ENCODE measurements at regions of chr14 and their contacts with region 1.

Region 1: GRCh38 chr14:34227834-34228649 is 234.0 kb downstream of the SPTSSA start:
- DNase-seq: peak; percentile 52 to 76 (median 68)
- ATAC-seq: peak; percentile 87 to 96 (median 92)
- H3K4me3 ChIP-seq: peak overlapping the region in 9 of 12 donors; percentile 13 to 51 (median 31)
- H3K27ac ChIP-seq: peak overlapping the region in 2 of 12 donors; percentile 23 to 32
- H3K4me1 ChIP-seq: peaks cover 0 to 32% (median 7%) of the 10 kb centered on the region in 12 donors
- H3K27me3 ChIP-seq: no peaks in the 10 kb centered on the region
- CTCF ChIP-seq: peak; percentile 65 to 91 (median 84)
- POLR2A ChIP-seq: no peak

Region 2: DNA sequence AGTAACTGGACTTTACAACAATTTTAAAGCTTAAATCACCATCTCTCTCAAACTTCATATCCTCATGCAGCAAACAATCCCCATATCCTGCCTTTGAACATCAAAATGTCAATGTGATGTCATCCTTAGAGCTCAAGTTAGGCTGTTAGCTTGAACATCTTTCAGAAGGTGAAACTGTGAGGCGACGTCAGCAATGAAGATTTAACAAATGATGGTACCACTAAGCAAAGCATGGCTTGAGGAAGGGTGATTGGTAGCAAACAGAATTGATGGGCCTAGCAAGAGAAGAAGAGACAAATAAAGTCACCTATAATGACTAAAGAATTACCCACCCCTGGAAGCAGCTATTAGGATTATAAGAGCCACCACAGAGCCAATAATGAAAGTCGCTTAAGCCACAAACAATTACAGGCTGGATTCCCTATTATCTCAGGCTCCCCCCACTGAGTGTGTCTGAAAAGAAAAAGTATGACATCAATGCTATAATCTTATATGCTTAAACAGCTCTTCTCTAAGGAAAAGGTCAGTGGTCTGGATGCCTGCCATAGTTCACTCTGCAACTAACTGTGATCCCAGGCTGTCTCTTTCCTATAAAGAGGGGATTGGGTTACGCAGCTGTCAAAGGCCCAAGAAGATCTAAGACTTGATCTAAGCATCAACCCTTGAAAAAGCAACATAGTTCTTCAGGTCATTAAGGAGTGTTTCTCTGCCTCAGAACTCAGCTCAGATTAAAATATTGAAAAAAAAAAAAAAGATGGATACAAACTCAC is 295.3 kb before region 1 on chr14:
- intact Hi-C with region 1: loop called in 2 of 10 experiments (anchors 2 to 5 kb)
- DNase-seq: peak in 3 of 5 donors; percentile 18 to 61 (median 40)
- ATAC-seq: peak; percentile 21 to 79 (median 72)
- H3K4me3 ChIP-seq: no peak overlapping the region
- H3K27ac ChIP-seq: peak overlapping the region in 10 of 12 donors; percentile 29 to 71 (median 58)
- H3K4me1 ChIP-seq: peaks cover 0 to 75% (median 40%) of the 10 kb centered on the region in 12 donors
- H3K27me3 ChIP-seq: no peaks in the 10 kb centered on the region
- CTCF ChIP-seq: no peak
- POLR2A ChIP-seq: no peak

Region 3: DNA sequence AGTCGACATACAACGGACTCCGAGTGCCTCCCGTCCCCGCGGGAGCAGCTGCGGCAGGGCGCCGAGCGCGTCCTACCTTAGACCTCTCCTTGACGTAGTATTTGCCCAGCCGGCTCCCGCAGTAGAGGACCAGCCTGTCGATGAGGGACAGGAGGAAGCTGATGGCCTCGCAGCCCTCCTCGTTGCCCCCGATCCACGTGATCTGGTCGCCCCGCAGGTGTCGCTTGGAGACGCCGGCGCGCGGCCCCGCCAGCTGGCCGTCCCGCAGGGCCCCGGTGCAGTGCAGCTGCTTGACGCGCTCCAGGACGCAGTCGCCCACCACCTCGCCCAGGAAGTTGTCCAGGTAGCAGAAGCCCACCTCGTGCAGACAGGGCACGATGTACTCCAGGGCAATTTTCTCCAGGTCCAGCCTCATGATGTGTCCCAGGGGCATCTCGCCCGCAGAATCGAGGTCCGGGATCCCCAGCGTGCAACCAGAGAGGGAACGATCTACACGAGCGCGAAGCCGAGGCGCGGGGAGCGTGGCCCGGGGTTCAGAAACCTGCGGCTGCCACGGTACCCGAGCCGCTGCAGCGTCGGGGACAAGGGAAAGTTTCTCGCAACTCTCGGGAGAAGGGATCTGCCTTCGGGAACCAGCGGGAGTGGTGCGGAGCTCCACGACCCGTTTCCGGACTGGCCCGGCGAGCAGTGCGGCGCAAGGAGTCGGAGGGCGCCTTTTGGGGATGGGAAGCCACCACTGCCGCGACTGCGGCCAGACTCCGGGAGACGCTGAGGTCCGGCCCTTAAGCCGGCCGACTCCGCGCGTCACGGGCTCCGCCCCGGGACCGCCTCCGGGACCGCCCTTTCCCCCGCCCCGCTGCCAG is 277.5 kb before region 1 on chr14 and contains the start of gene EGLN3:
- intact Hi-C with region 1: loop called in 5 of 10 experiments (anchors 5 to 10 kb)
- DNase-seq: peak; percentile 92 to 94 (median 93)
- ATAC-seq: peak; percentile 97 to 99 (median 98)
- H3K4me3 ChIP-seq: peak within 1 kb of the TSS; percentile 49 to 87 (median 70)
- H3K27ac ChIP-seq: peak within 1 kb of the TSS; percentile 13 to 91 (median 80)
- H3K4me1 ChIP-seq: peaks cover 0 to 49% (median 16%) of the 10 kb centered on the region in 12 donors
- H3K27me3 ChIP-seq: peaks cover 0 to 23% (median 0%) of the 10 kb centered on the region in 9 donors
- CTCF ChIP-seq: no peak
- POLR2A ChIP-seq: peak; percentile 99 to 100
- total RNA-seq, gene EGLN3: 46.5 to 221 (median 138) TPM

Region 4: DNA sequence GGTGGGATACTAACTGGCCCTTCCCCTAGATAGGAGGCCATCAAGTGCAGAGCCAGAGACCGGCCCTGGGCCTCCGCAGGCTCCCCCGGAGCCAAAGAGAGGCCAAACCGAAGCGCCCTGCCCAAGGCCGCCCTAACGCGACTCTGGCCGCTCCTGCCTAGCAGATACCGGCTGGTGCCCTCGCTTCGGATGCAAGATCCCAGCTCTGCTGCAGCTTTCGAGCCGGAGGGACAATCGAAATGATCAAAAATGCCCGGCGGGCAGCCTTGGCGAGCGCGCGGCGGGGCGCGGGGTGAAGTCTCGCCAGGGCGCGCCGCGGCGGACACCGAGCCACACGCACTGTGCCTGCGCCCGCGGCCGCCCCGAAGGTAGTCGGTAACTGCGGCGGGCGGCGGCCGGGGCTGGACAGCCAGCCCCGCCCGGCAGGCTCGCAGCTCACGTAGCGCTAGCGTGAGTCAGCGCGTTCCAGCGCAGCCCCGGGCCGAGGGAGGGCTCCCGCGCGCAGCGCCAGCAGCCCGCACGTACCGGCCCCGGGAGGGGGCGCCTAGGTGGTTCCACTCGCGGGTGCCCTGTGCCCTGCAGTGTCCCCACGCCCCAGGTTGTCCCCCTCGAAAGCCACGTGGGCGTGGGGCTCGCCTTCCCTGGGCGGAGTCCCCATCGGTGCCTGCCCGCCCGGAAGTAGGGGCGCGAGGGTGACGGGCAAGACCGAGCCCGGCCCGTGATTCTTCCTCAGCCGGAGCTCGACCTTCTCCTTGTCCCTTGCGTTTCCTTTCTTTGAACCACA is 168.0 kb before region 1 on chr14:
- intact Hi-C with region 1: loop called in 2 of 10 experiments (anchors 2 to 5 kb)
- DNase-seq: peak; percentile 83 to 91 (median 87)
- ATAC-seq: peak; percentile 57 to 96 (median 93)
- H3K4me3 ChIP-seq: peak overlapping the region; percentile 37 to 82 (median 64)
- H3K27ac ChIP-seq: peak overlapping the region; percentile 83 to 98 (median 95)
- H3K4me1 ChIP-seq: peaks cover 0 to 43% (median 29%) of the 10 kb centered on the region in 12 donors
- H3K27me3 ChIP-seq: no peaks in the 10 kb centered on the region
- CTCF ChIP-seq: peak; percentile 6 to 54 (median 38)
- POLR2A ChIP-seq: peak; percentile 24 to 76

Region 5: GRCh38 chr14:34113005-34113511 is 115.0 kb before region 1 on chr14:
- intact Hi-C with region 1: loop called in 1 of 10 experiments (anchors 10 kb)
- DNase-seq: no peak
- ATAC-seq: no peak
- H3K4me3 ChIP-seq: no peak overlapping the region
- H3K27ac ChIP-seq: no peak overlapping the region
- H3K4me1 ChIP-seq: no peaks in the 10 kb centered on the region
- H3K27me3 ChIP-seq: no peaks in the 10 kb centered on the region
- CTCF ChIP-seq: no peak
- POLR2A ChIP-seq: no peak